Heart right ventricle (tissue), 16 donors: ENCODE measurements at regions of chr7 and their contacts with region 1.

Region 1: GRCh38 chr7:104848138-104848990 is 165.6 kb upstream of the KMT2E start:
- DNase-seq: peak in 1 of 2 donors; percentile 54
- ATAC-seq: peak in 3 of 8 donors; percentile 37 to 55 (median 51)
- H3K4me3 ChIP-seq: no peak overlapping the region
- H3K27ac ChIP-seq: no peak overlapping the region
- H3K4me1 ChIP-seq: no peaks in the 10 kb centered on the region
- H3K27me3 ChIP-seq: peaks cover 0 to 34% (median 25%) of the 10 kb centered on the region in 7 donors
- CTCF ChIP-seq: peak; percentile 65 to 85 (median 81)

Region 2: DNA sequence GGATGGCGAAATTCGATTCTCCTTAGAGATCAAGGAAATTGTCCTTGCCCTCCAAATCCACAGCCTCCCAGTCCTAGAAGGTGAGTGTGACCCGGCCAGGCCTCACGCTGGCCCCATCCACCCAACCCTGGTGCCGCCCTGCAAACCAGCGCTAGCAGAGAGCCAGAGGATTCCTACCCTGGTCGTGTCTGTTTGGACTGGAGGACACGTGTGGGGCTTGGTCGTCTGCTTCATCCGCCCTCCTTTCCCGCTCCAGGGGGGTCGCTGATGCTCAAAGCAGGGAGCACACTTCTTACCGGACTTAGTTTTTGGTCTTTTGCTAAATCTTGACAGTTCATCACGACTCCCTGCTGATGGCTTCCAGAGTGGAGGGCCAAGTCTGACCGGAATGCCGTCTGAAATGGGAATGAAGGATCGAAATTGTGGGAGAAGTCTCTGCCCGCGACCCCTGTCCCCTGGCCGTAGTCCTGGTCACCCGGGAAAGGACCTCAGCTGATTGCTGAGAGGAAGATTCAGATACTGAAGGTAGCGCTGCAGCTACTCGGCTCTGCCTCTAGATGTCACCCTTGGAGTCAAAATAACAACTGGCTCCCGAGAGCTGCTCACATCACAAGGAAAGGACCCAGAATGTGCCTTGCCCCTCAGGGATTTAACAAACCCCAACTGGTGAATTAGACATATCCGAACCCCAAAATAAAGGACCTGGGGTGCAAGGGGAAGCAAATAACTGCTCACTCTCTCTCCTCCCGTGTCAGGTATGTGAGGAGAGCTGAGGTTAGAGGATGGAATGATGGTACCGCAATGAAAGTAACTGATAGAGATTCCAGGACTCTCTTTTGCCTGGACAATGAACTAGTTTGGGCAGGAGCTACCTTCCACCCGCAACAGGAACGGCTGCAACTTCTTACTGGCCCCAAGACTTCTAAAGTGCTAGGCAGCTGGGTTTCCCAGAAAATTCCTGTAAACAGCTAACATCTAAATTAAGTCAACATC is 617.0 kb before region 1 on chr7:
- intact Hi-C with region 1: loop called in 7 of 10 experiments (anchors 5 to 10 kb)
- DNase-seq: peak in 1 of 2 donors; percentile 22
- ATAC-seq: peak in 6 of 8 donors; percentile 49 to 78 (median 58)
- H3K4me3 ChIP-seq: no peak overlapping the region
- H3K27ac ChIP-seq: no peak overlapping the region
- H3K4me1 ChIP-seq: peaks cover 0 to 6% (median 0%) of the 10 kb centered on the region in 9 donors
- H3K27me3 ChIP-seq: peaks cover 0 to 35% (median 17%) of the 10 kb centered on the region in 7 donors
- CTCF ChIP-seq: peak; percentile 56 to 84 (median 77)

Region 3: DNA sequence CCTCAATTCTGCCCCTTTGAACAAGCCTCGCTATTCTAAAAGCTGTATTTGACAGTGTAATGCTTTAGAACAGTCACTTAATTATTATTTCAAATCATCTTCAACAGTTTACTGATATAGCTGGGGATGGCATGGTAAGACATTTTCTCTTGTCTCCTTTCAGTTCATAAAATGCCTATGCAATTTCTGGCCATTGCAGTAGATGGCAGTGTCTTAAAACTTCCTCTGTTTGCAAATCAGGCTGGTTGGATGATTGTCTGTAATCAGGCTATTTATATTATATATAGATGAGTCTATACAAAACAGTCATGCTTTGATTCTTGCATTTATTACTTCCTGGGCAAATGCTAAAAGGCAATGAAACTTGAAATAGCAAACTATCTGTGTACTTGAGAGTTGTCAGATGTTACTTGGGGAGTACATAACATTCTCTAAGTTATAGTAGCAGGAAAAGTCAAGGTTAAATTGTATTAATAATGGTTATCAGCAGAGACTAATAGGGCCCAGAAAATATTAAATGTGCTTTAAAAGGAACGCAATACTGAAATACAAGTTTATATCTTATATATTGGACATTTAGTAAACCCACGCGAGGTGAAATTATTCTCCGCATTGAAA is 575.5 kb before region 1 on chr7:
- intact Hi-C with region 1: loop called in 2 of 10 experiments (anchors 2 to 5 kb)
- DNase-seq: no peak
- ATAC-seq: no peak
- H3K4me3 ChIP-seq: no peak overlapping the region
- H3K27ac ChIP-seq: no peak overlapping the region
- H3K4me1 ChIP-seq: no peaks in the 10 kb centered on the region
- H3K27me3 ChIP-seq: peaks cover 0 to 8% (median 0%) of the 10 kb centered on the region in 7 donors
- CTCF ChIP-seq: peak in 8 of 9 donors; percentile 11 to 65 (median 43)

Region 4: DNA sequence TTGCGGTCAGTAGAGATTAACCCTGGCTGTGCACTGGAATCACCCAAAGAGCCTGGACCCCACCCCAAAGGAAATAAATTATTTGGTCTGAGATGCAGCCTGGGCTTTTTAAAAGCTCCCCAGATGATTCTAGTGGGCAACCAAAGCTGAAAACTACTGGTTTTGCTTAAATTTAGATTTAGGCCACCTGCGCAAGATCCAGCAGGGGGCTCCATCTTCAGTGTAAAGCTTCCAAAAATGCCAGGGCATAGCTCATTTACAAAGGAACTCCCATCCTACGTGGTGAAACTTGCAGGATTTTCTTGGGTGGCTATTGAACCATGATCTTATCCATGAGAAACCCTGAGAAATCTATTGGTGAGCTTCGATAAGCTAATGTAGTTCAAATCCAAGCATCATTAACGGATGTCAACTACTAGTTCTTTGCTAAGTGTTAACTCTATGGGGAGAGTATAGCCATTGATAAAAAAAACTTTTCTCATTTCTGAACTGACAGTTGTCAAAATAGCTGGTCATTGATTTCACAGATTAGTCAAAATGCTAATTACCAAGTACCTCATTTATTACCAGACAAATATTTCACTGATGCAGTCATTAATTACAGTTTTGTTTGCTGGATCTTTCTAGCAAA is 204.7 kb before region 1 on chr7:
- intact Hi-C with region 1: loop called in 1 of 10 experiments (anchors 5 kb)
- DNase-seq: no peak
- ATAC-seq: no peak
- H3K4me3 ChIP-seq: no peak overlapping the region
- H3K27ac ChIP-seq: no peak overlapping the region
- H3K4me1 ChIP-seq: no peaks in the 10 kb centered on the region
- H3K27me3 ChIP-seq: peaks cover 0 to 32% (median 0%) of the 10 kb centered on the region in 7 donors
- CTCF ChIP-seq: peak in 6 of 9 donors; percentile 14 to 41 (median 26)